Calu3 (cell line): ENCODE measurements at regions of chr5 and their contacts with region 1.

Region 1: GRCh38 chr5:149185067-149185466 is 43.8 kb downstream of the ABLIM3 start:
- DNase-seq: no peak
- H3K4me3 Mint-ChIP-seq: no peak overlapping the region
- H3K27ac Mint-ChIP-seq: no peak overlapping the region
- H3K4me1 Mint-ChIP-seq: peaks cover 59% of the 10 kb centered on the region
- H3K27me3 Mint-ChIP-seq: no peaks in the 10 kb centered on the region
- CTCF ChIP-seq: no peak

Region 2: GRCh38 chr5:149174847-149175234 is 10.2 kb before region 1 on chr5:
- CTCF ChIA-PET with region 1: interaction called, 3 read pairs
- intact Hi-C with region 1: loop called (anchors 1 kb)
- DNase-seq: no peak
- H3K4me3 Mint-ChIP-seq: no peak overlapping the region
- H3K27ac Mint-ChIP-seq: peak overlapping the region; percentile 66
- H3K4me1 Mint-ChIP-seq: peaks cover 77% of the 10 kb centered on the region
- H3K27me3 Mint-ChIP-seq: no peaks in the 10 kb centered on the region
- CTCF ChIP-seq: no peak